H1 (cell line): ENCODE measurements at regions of chr13 and their contacts with region 1.

Region 1: DNA sequence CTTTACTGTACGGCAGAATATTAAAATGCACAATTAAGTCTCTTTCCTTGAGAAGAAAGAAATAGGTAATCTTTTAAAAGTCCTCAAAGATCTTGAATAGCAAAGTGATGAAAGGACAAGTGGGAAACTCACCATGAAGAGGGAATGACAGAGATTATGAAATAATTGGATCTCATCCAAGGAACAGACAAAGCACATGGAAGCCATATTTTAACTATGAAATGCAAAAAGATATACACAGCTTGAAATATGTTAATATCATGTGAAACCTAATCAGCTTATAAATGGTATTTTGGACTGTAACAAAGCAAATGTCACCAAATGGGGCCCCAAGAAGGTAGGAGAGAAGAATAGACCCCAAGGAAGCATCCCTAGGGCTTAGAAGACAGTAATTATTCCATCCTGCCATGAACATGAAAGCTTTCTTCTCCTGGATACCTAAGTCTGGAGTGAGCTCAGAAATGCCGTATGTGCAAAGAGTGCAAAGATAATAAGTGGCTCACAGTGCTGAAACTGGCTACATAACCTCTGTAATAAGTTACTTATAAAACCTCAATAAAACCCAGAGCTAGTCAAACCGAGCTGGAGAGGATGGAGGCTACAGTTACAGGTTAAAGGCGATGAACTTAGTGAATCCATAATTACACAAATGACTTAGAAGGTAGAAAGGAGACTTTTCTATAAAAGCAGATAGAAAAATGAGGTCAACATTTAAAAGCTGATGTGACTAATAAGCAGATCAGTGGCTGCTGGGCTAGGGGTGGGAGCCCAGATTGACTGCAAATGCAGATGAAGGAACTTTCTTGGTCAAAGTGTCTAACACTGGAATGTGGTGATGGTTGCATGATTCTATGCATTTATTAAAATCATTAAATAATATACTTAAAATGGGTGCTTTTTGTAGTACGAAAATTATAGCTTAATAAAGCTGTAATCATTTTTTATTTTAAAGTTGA is 34.4 kb downstream of the DCLK1 start:
- DNase-seq: no peak
- H3K4me3 ChIP-seq: no peak overlapping the region
- H3K27ac ChIP-seq: no peak overlapping the region
- H3K4me1 ChIP-seq: peaks cover 0 to 5% (median 0%) of the 10 kb centered on the region in 4 experiments; a peak in 1 of 7 replicates
- H3K27me3 ChIP-seq: no peaks in the 10 kb centered on the region
- CTCF ChIP-seq: no peak
- EP300 ChIP-seq: no peak
- POLR2A ChIP-seq: no peak
- RAD21 ChIP-seq: no peak

Region 2: GRCh38 chr13:36086117-36086516 is 10.6 kb before region 1 on chr13:
- CTCF ChIA-PET with region 1: interaction called, 14 read pairs
- POLR2A ChIA-PET with region 1: no interaction called
- DNase-seq: peak in 1 of 2 experiments; percentile 7
- H3K4me3 ChIP-seq: no peak overlapping the region
- H3K27ac ChIP-seq: no peak overlapping the region
- H3K4me1 ChIP-seq: peaks cover 0 to 8% (median 3%) of the 10 kb centered on the region in 4 experiments; a peak in 4 of 7 replicates
- H3K27me3 ChIP-seq: no peaks in the 10 kb centered on the region
- CTCF ChIP-seq: peak; percentile 43 to 48 (median 44); a peak in 3 of 4 replicates
- EP300 ChIP-seq: no peak
- POLR2A ChIP-seq: no peak
- RAD21 ChIP-seq: peak; percentile 55 to 63

Region 3: DNA sequence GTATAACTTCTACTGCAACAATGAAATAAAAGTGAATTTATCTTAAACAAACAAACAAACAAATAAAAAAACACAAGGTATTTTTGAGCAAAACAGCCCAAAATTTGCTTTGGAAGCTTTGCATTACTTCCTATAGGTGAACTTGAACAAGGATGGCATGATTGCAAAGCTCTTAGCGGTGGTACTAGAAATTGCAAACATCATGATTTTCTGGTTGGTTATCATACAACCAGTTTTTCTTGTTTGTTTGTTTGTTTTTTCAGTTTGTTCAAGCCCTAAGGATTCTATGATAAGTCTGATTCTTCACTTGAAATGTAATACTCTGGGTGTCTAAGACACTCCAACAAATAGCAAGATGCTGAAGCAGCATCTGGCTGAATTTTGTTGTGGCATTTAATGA is 18.5 kb after region 1 on chr13:
- CTCF ChIA-PET with region 1: no interaction called
- POLR2A ChIA-PET with region 1: no interaction called
- DNase-seq: no peak
- H3K4me3 ChIP-seq: no peak overlapping the region
- H3K27ac ChIP-seq: no peak overlapping the region
- H3K4me1 ChIP-seq: no peaks in the 10 kb centered on the region
- H3K27me3 ChIP-seq: no peaks in the 10 kb centered on the region
- CTCF ChIP-seq: no peak
- EP300 ChIP-seq: no peak
- POLR2A ChIP-seq: no peak
- RAD21 ChIP-seq: no peak